ENCODE measurements at regions of chr7 and their contacts with region 1.

Region 1: DNA sequence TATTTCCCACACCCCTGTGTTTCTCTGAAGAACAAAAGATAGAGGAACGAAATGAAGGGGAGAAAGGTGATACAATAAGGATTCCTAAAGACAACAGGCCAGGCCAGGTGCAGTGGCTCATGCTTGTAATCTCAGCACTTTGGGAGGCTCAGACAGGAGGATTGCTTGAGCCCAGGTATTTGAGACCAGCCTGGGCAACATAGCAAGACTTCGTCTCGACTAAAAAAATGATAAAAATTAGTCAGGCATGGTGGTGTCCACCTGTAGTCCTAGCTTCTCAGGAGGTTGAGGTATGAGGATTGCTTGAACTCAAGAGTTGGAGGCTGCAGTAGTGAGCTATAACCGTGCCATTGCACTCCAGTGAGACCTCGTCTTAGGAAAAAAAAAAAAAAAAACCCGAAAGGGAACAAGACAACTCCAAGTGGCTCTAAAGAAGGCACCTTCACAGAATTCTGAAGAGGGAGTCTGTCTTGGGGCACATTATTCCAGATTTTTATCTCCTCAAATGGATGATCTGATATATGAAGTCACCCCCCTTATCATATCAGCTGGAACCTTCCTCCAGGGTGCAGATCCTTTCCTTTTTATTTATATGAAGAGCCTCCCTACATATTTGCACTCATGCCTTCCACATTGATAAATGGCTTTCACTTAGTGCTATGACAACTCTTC is 41.5 kb upstream of the FAM3C start:
- DNase-seq: no peak
- H3K4me3 ChIP-seq: no peak overlapping the region; the same call in 1 of the 2 replicates
- H3K27me3 ChIP-seq: no peaks in the 10 kb centered on the region
- CTCF ChIP-seq: no peak

Region 2: DNA sequence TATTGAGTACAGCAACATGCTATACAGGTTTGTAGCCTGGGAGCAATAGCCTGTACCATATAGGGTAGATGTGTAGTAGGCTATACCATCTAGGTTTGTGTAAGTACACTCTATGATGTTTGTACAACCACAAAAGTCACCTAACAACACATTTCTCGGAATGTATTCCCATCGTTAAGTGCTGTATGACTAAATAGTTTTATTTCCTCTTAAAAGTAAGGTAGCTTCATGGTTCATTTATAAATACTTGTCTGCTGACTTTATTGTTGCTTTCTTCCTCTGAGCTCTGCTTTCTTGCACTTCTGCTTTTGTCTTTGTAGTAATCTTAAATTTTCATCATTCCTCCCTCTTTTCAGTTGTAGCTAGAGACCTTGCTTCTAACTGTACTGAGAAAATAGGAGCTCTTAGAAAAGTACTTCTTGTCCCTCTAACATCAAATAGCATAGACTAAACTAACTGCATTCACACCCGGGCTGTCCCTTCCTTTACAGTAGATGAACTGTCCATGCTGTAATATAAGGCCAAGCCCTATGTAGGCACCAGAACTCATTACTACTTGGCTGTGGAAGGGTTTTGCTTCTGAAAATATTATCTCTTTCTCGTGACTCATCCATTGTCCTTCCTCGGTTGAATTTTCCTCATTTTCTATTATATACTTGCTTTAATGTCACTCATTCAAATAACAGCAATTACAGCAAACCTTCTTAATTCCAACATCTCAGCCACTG is 13.9 kb after region 1 on chr7:
- CTCF ChIA-PET with region 1: interaction called, 7 read pairs
- POLR2A ChIA-PET with region 1: interaction called, 16 read pairs
- DNase-seq: no peak
- H3K4me3 ChIP-seq: no peak overlapping the region
- H3K27me3 ChIP-seq: no peaks in the 10 kb centered on the region
- CTCF ChIP-seq: no peak